Activated T-helper 2 cell treated with anti-CD3 and anti-CD28 coated beads, Interferon-gamma antibody, Interleukin-2, Interleukin-4, amounts not matched to agents 10 μg/mL and 5 μg/mL and 100 μg/mL, durations not matched to agents 14 hours and 24 hours and 36 hours (primary cell): ENCODE measurements at regions of chr22 and their contacts with region 1.

Region 1: DNA sequence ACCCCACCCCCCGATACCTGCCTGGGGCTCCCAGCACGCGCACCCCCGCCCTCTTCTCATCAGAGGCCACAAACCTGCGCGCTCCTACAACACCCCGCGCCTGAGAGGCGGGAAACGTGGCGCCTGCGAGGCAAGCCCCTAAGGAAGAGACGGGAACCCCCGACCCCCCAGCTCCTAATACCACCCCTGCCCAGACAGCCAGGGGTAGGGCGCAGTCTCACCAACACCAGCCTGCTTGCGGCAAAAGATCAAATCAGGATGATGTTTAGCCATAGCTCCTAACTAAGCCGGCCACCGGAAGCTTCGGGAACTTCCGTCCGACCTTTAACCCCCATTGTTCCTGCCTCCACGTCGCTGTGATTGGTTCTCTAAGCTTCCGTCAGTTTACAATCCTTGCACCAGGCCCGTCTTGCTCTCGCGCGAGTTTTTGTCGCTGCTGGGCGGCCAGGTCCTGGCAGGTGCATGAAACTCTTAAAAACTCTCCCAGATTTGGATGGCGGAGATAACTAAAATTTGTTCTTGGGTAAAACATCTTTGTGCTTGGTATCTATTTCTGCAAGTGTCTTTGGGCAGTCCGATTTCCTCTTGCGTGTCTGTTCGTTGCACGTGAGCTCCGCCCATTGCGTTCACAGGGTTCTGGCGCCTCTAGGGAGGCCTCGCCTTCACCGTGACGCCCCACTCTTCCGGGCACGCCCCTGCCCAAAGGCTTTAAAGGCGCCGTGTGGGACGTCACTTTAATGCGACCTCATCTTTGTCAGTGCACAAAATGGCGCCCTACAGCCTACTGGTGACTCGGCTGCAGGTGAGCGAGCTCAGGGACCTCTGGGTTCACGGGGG is at the starts of genes ACO2 and PHF5A:
- DNase-seq: peak; percentile 97
- H3K4me3 Mint-ChIP-seq: peak within 1 kb of the TSS; percentile 85
- H3K27ac Mint-ChIP-seq: peak within 1 kb of the TSS; percentile 98
- H3K4me1 Mint-ChIP-seq: peaks cover 27% of the 10 kb centered on the region
- H3K27me3 Mint-ChIP-seq: no peaks in the 10 kb centered on the region
- total RNA-seq, gene ACO2: 94.1 and 96.1 TPM in 2 replicates
- total RNA-seq, gene PHF5A: 72.1 and 74.3 TPM in 2 replicates

Region 2: GRCh38 chr22:41381329-41382097 is 87.1 kb before region 1 on chr22 and contains the start of gene TEF:
- intact Hi-C with region 1: loop called (anchors 1 kb)
- DNase-seq: peak; percentile 97
- H3K4me3 Mint-ChIP-seq: peak within 1 kb of the TSS; percentile 87
- H3K27ac Mint-ChIP-seq: peak within 1 kb of the TSS; percentile 91
- H3K4me1 Mint-ChIP-seq: peaks cover 6% of the 10 kb centered on the region
- H3K27me3 Mint-ChIP-seq: peaks cover 4% of the 10 kb centered on the region
- total RNA-seq, gene TEF: 1.7 and 1.9 TPM in 2 replicates

Region 3: GRCh38 chr22:41448189-41448808 is 20.3 kb before region 1 on chr22:
- intact Hi-C with region 1: loop called (anchors 1 kb)
- DNase-seq: peak; percentile 91
- H3K4me3 Mint-ChIP-seq: peak overlapping the region; percentile 96
- H3K27ac Mint-ChIP-seq: peak overlapping the region; percentile 98
- H3K4me1 Mint-ChIP-seq: peaks cover 6% of the 10 kb centered on the region
- H3K27me3 Mint-ChIP-seq: no peaks in the 10 kb centered on the region